ENCODE measurements at regions of chr1 and their contacts with region 1.

Region 1: DNA sequence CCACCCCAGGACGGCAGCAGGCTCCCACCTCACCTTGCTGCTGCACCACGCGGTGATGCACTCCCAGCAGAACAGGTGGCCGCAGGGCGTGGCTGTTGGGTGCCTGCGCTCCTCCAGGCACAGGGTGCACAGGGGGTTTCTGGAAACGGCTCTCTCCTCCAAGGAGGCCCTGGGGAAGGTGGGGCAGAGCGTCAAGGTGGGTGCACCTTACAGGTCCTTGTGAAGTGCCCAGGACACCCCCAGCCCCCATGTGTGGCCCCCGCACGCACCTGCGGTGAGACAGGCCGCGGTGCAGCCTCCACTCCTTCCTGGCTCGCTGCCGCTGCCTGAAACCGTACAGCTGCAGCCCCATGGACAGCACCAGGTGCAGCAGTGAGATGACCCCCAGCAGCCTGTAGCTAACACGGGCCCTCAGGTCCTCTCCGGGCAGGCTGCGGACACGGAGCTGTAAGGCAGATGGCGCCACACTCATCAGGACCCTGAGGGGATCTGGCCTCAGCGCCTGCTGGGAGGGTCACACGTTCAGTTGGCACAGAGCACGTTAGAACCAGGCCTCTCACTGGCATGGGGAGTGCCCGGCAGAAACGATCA is 5.8 kb downstream of the PEX10 start:
- DNase-seq: no peak
- H3K4me3 ChIP-seq: no peak overlapping the region
- H3K27ac ChIP-seq: no peak overlapping the region
- H3K4me1 ChIP-seq: peaks cover 2 to 3% of the 10 kb centered on the region in 2 donors
- H3K27me3 ChIP-seq: no peaks in the 10 kb centered on the region
- CTCF ChIP-seq: no peak
- POLR2A ChIP-seq: no peak

Region 2: DNA sequence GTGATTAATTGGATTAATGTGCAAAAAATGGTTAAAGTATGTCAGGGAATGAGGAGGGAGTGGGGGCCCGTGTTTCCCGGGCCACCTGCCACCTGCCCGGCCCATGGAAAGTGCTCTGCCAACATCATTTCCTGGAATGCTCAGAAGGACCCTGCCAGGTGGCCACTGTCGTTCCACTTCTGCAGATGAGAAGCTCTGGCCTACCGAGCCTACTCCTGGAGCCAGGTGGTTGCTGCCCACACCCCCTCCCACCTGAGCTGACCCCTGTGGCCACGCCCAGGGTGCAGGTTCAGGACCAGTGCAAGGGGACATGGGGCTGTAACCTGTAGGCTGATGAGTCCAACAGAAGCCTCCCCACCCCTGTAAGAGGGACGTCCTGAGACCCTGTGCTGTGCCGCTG is 762.1 kb after region 1 on chr1:
- intact Hi-C with region 1: loop called (anchors 5 kb)
- DNase-seq: no peak
- H3K4me3 ChIP-seq: no peak overlapping the region
- H3K27ac ChIP-seq: no peak overlapping the region
- H3K4me1 ChIP-seq: peaks cover 5 to 21% of the 10 kb centered on the region in 2 donors
- H3K27me3 ChIP-seq: no peaks in the 10 kb centered on the region
- CTCF ChIP-seq: no peak
- POLR2A ChIP-seq: no peak